Activated CD4-positive, alpha-beta memory T cell treated with anti-CD3 and anti-CD28 coated beads for 36 hours (primary cell): ENCODE measurements at regions of chr5 and their contacts with region 1.

Region 1: DNA sequence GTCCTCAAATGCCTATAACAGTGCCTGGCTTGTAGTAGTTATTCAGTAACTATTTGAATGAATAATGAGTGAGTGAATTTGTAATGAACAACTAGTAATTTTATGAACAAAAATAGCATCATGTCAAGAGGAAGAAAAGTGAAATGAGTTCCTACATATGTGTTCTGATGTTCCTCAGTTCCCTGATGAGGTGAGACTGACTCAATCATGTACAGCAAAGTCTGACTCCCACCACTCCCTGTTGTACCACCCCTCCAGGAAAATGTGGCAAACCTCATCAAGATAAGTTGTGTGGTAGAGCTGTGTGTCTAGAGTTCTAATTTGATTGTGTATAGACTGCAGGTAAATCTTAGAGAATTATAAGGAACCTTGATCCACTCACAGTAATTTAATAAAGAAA is 201.6 kb downstream of the GOLPH3 start:
- DNase-seq: peak; percentile 17
- H3K4me3 Mint-ChIP-seq: no peak overlapping the region
- H3K27ac Mint-ChIP-seq: no peak overlapping the region
- H3K4me1 Mint-ChIP-seq: peaks cover 9% of the 10 kb centered on the region
- H3K27me3 Mint-ChIP-seq: no peaks in the 10 kb centered on the region

Region 2: DNA sequence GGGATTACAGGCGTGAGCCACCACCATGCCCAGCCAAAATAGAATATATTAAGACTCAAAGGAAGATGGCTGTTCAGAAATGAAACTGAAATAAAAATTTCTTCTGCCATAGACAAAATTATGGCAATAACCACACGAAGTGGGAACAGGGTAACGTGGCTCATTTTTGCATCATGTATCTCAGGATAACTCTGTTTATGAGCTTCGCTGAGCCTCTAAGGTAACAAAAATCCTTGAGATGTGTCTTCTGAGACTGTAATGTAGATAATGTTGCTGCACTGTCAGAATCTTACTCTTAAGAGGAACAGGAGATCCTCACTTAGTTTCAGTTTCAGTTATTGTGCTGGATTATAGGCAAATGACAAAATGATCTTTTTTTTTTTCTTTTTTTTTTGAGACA is 47.7 kb after region 1 on chr5:
- CTCF ChIA-PET with region 1: no interaction called
- POLR2A ChIA-PET with region 1: no interaction called
- intact Hi-C with region 1: no loop called
- DNase-seq: no peak
- H3K4me3 Mint-ChIP-seq: no peak overlapping the region
- H3K27ac Mint-ChIP-seq: peak overlapping the region; percentile 11
- H3K4me1 Mint-ChIP-seq: peaks cover 4% of the 10 kb centered on the region
- H3K27me3 Mint-ChIP-seq: no peaks in the 10 kb centered on the region

Region 3: DNA sequence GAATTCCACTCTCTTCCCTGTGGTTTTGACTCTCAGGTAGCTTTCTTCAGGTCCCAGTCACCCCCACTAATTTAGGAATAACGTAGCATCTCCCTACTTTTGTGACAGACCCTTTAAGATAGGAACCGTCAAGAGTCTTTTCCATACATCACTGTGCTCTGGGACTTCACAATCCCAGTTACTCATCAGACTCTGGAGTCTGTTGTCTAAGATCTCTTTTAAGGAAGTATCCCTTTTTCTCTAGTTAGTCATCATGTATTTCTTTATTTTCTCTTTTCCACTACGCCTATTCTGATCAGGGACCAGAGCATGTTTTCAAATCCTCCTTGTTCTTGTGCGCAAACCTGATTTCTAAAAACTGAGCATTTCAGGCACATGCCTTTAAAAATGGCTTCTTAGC is 58.5 kb after region 1 on chr5:
- CTCF ChIA-PET with region 1: no interaction called
- POLR2A ChIA-PET with region 1: no interaction called
- intact Hi-C with region 1: loop called (anchors 5 kb)
- DNase-seq: no peak
- H3K4me3 Mint-ChIP-seq: no peak overlapping the region
- H3K27ac Mint-ChIP-seq: no peak overlapping the region
- H3K4me1 Mint-ChIP-seq: peaks cover 14% of the 10 kb centered on the region
- H3K27me3 Mint-ChIP-seq: no peaks in the 10 kb centered on the region